ENCODE measurements at regions of chr4 and their contacts with region 1.

Region 1: GRCh38 chr4:56544573-56545131 is 39.1 kb downstream of the ARL9 start:
- DNase-seq: peak; percentile 85
- ATAC-seq: peak; percentile 99
- H3K4me3 Mint-ChIP-seq: peak overlapping the region; percentile 61
- H3K27ac Mint-ChIP-seq: no peak overlapping the region
- H3K4me1 Mint-ChIP-seq: peaks cover 10% of the 10 kb centered on the region
- H3K27me3 Mint-ChIP-seq: peaks cover 4% of the 10 kb centered on the region
- CTCF ChIP-seq: peak; percentile 97

Region 2: GRCh38 chr4:56530269-56531148 is 14.1 kb before region 1 on chr4:
- CTCF ChIA-PET with region 1: interaction called, 11 read pairs
- POLR2A ChIA-PET with region 1: no interaction called
- intact Hi-C with region 1: no loop called
- DNase-seq: peak; percentile 89
- ATAC-seq: peak; percentile 99
- H3K4me3 Mint-ChIP-seq: no peak overlapping the region
- H3K27ac Mint-ChIP-seq: no peak overlapping the region
- H3K4me1 Mint-ChIP-seq: no peaks in the 10 kb centered on the region
- H3K27me3 Mint-ChIP-seq: peaks cover 7% of the 10 kb centered on the region
- CTCF ChIP-seq: no peak

Region 3: DNA sequence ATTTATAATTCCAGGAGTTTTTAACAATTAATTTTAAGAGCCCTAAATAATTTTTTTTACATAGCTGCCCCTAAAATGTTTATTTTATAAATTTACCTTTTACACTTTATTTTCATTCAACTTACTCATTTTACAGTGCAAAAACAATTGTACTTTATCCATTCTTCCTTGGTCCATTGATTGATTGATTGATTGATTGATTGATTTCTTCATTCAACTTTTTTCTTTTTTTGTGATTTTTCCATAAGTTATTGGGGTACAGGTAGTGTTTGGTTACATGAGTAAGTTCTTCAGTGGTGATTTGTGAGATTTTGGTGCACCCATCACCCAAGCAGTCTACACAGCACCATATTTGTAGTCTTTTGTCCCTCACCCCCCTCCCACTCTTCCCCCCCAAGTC is 42.4 kb after region 1 on chr4:
- CTCF ChIA-PET with region 1: no interaction called
- POLR2A ChIA-PET with region 1: no interaction called
- intact Hi-C with region 1: no loop called
- DNase-seq: no peak
- ATAC-seq: no peak
- H3K4me3 Mint-ChIP-seq: no peak overlapping the region
- H3K27ac Mint-ChIP-seq: no peak overlapping the region
- H3K4me1 Mint-ChIP-seq: no peaks in the 10 kb centered on the region
- H3K27me3 Mint-ChIP-seq: peaks cover 2% of the 10 kb centered on the region
- CTCF ChIP-seq: no peak